AG04450 (cell line): ENCODE measurements at regions of chr16 and their contacts with region 1.

Region 1: DNA sequence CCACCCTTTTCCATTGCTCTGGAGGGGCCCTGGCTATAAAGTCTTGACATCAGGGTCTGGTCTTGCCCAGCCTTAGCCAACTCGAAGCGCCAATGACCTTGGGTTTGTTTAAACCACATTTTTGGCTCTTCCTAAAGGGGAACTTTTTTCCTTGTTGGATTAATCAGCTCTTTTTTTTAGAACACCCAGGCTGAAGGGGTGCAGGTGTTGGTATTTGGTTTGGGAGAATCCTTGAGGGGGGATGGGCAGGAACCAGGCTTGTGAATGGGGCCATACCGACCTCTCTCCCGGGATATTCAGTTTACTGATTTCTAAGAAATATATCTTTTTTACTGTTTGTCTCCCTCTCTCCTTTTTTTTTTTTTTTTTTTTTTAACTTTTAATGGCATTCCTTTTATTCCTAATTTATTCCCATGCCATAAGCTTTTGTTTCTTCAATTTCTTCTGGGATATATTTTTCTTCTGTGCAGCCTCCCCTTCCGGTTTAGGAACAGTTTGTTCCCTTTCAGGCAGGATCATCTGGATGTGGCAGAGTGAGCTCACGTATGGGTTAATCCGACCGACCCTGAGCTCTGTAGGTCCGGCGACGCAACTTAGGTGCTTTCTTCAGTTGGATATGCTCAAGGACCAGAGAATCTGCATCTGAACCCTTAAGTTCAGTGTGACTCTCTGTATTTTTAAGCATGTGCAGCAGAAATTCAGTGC is 129.5 kb downstream of the ABCC6 start:
- DNase-seq: no peak
- H3K4me3 ChIP-seq: no peak overlapping the region
- H3K27ac ChIP-seq: peak overlapping the region; percentile 52
- H3K27me3 ChIP-seq: no peaks in the 10 kb centered on the region
- CTCF ChIP-seq: no peak

Region 2: GRCh38 chr16:16073891-16074881 is 19.6 kb before region 1 on chr16:
- CTCF ChIA-PET with region 1: no interaction called
- POLR2A ChIA-PET with region 1: interaction called, 10 read pairs
- DNase-seq: peak; percentile 81
- H3K4me3 ChIP-seq: no peak overlapping the region
- H3K27ac ChIP-seq: peak overlapping the region; percentile 85
- H3K27me3 ChIP-seq: no peaks in the 10 kb centered on the region
- CTCF ChIP-seq: no peak; the same call in 1 of the 2 replicates